HCT116 (cell line): ENCODE measurements at regions of chr17 and their contacts with region 1.

Region 1: GRCh38 chr17:49315551-49316257 is 46.3 kb downstream of the ZNF652 start:
- DNase-seq: peak; percentile 79
- ATAC-seq: peak; percentile 99
- H3K4me3 ChIP-seq: no peak overlapping the region
- H3K27ac ChIP-seq: no peak overlapping the region
- H3K4me1 ChIP-seq: peaks cover 0 to 13% of the 10 kb centered on the region in 2 experiments; a peak in 2 of 4 replicates
- H3K27me3 ChIP-seq: no peaks in the 10 kb centered on the region
- CTCF ChIP-seq: peak; percentile 77 to 96 (median 95)
- POLR2A ChIP-seq: no peak
- RAD21 ChIP-seq: peak; percentile 98

Region 2: DNA sequence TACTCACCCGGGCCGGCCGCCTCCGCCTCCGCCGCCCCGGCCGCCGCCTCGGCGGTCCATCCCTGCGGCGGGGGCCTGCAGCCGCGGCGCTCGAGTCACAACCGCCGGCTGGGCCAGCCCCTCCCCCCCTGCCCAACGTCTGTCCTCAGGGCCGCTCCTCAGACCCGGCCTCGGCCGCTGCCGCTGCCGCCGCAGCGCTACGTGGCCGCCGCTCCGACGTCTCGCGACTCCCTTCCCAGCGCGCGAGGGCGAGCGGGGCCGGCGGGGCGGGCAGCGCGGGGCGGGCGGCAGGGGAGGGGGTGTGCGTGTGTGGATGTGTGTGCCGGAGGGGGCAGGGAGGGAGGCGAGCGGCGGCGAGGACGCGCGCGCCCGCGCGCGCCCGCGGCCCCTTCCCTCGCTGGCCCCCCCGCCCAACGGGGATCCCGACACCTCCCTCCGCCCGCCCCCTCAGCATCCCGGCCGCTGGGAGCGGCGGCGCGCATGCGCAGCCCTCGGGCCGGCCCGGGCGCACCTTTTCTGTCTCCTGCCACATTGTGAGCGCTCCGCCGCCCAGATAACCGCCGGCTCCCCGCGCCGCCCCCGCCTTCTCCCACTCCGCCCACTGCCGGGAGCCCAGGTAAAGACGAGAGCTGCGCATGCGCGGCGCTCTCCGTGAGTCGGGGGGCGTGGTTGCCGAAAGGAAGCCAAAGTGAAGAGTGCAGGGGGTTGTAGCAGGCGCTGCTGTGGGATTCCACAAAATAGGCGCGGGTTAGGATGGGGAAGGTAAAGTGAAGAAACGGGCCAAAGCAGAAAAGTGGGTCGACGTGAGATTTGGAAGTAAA is 46.4 kb after region 1 on chr17 and contains the start of gene ZNF652:
- CTCF ChIA-PET with region 1: interaction called, 9 read pairs
- POLR2A ChIA-PET with region 1: no interaction called
- RAD21 ChIA-PET with region 1: interaction called in 1 of 2 experiments, 3 read pairs
- intact Hi-C with region 1: loop called (anchors 2 kb)
- DNase-seq: peak; percentile 93
- ATAC-seq: peak; percentile 86
- H3K4me3 ChIP-seq: peak within 1 kb of the TSS; percentile 81 to 86
- H3K27ac ChIP-seq: peak within 1 kb of the TSS; percentile 92
- H3K4me1 ChIP-seq: peaks cover 18 to 24% of the 10 kb centered on the region in 2 experiments
- H3K27me3 ChIP-seq: no peaks in the 10 kb centered on the region
- CTCF ChIP-seq: no peak
- POLR2A ChIP-seq: peak; percentile 35
- RAD21 ChIP-seq: no peak
- total RNA-seq, gene ZNF652: 27.8 TPM

Region 3: DNA sequence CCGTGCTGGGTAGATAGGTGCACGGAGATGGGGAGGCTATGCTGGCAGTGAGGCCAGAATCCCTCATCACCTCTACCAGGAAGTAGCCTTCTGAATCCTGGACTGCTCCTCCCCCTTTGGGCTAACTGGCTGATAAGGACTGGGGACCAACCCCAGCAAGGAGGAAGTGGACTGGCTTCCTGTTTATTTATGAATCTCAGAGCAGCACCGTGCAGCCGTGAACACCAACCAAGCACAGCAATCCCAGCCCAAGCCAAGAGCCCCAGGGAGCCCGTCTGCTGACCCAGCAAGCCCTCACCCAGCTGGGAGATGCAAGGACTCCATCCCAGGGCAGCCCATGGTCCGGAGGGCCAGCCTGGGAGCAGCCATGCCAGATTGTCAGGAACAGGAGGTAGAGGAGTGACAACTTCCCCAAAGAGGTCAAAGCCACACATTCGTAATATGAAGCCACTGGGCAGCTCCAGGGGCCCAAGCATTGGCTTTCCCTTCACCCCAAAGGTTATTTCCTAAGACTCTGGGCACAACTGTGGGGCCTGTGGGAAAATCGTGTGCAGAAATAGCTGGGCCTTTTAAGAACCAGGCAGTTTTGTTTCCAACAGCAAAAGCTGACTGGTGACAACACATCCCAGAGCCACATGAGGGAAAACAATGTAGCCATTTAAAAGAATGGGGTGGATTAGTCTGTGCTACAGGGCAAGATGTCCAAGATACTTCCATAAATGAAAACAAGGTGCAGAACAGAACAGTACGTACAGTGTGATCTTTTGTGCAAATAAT is 75.0 kb after region 1 on chr17:
- CTCF ChIA-PET with region 1: interaction called, 45 read pairs
- POLR2A ChIA-PET with region 1: no interaction called
- RAD21 ChIA-PET with region 1: interaction called in 1 of 2 experiments, 5 read pairs
- intact Hi-C with region 1: loop called (anchors 1 kb)
- DNase-seq: no peak
- ATAC-seq: no peak
- H3K4me3 ChIP-seq: no peak overlapping the region
- H3K27ac ChIP-seq: no peak overlapping the region; the same call in 1 of the 2 replicates
- H3K4me1 ChIP-seq: peaks cover 15 to 30% of the 10 kb centered on the region in 2 experiments
- H3K27me3 ChIP-seq: no peaks in the 10 kb centered on the region
- CTCF ChIP-seq: no peak
- POLR2A ChIP-seq: no peak
- RAD21 ChIP-seq: no peak

Region 4: DNA sequence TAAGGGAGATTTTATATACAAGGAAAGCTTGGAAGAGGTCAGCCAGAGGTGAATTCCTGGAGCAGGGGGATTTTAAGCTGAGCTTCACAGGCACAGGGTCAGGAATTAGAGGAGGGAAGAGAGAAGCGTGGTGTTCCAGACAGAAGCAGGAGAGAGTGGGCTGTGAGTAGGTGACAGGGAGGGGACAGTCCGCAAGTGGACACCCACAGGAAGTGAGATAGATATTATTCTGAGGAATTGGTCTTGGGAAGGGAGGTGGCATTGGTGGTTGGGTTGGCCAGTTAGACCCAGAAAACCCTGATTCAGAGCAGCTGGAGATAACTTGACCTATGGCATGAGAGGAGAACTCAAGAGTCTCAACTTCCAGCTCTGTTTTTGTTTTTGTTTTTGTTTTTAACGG is 84.3 kb after region 1 on chr17:
- CTCF ChIA-PET with region 1: interaction called, 45 read pairs
- POLR2A ChIA-PET with region 1: interaction called, 3 read pairs
- RAD21 ChIA-PET with region 1: interaction called, 3 to 5 read pairs
- intact Hi-C with region 1: loop called (anchors 1 kb)
- DNase-seq: no peak
- ATAC-seq: no peak
- H3K4me3 ChIP-seq: no peak overlapping the region
- H3K27ac ChIP-seq: no peak overlapping the region
- H3K4me1 ChIP-seq: no peaks in the 10 kb centered on the region
- H3K27me3 ChIP-seq: no peaks in the 10 kb centered on the region
- CTCF ChIP-seq: no peak
- POLR2A ChIP-seq: no peak
- RAD21 ChIP-seq: no peak

Region 5: GRCh38 chr17:49438436-49439278 is 123.0 kb after region 1 on chr17:
- CTCF ChIA-PET with region 1: no interaction called
- POLR2A ChIA-PET with region 1: no interaction called
- RAD21 ChIA-PET with region 1: no interaction called
- intact Hi-C with region 1: no loop called
- DNase-seq: no peak
- ATAC-seq: no peak
- H3K4me3 ChIP-seq: no peak overlapping the region
- H3K27ac ChIP-seq: no peak overlapping the region
- H3K4me1 ChIP-seq: no peaks in the 10 kb centered on the region
- H3K27me3 ChIP-seq: peaks cover 19% of the 10 kb centered on the region; the same call in 1 of the 2 replicates
- CTCF ChIP-seq: no peak
- POLR2A ChIP-seq: no peak
- RAD21 ChIP-seq: no peak